ENCODE measurements at regions of chr11 and their contacts with region 1.

Region 1: DNA sequence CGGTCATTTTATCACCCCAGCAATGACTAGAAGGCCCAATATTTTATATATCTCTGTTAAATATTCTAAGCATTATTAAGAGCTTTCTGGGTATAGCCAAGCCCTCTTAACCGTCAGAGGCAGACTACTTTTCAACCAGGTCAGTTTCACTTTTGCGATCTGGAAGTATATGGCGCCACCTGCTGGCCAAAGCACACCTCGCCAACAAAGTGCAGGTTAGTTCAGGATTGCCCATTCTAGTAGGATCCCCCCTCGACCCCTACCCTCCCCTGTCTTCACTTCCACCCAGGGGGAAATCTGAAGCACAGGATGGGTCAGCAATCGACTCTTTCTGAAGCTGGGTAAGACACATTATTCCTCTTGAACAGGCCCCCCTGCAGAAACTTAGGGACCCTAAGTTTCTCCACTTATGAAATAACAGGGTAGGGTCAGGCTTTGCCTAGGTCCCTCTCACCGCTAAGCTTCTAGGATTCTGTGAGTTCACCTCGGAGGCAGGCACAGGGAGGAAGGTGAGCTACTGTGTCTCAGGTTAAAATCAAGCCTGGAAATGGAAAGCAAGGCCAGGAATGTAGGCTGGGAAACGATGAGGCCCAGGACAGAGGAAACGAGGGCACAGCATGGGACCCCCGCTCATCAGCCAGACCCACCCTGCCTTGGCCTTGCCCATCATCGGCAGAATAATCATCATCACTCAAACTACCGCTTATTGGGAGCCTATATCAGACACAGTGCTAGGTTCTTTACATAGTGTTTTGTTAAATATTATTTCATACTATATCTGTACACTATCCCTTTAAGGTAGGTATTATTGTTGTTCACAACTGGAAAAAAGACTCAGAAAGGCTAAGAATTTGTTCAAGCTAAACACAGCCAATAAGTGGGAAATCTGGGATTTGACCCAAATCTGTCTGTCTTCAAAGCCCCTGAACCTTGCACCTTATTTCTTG is 35.6 kb downstream of the KCNJ1 start:
- DNase-seq: peak; percentile 96
- H3K4me3 Mint-ChIP-seq: peak overlapping the region; percentile 8
- H3K27ac Mint-ChIP-seq: peak overlapping the region; percentile 85
- H3K4me1 Mint-ChIP-seq: peaks cover 17% of the 10 kb centered on the region
- H3K27me3 Mint-ChIP-seq: no peaks in the 10 kb centered on the region

Region 2: GRCh38 chr11:128157423-128158298 is 673.8 kb before region 1 on chr11:
- CTCF ChIA-PET with region 1: interaction called, 35 read pairs
- intact Hi-C with region 1: loop called (anchors 1 kb)
- DNase-seq: peak; percentile 74
- H3K4me3 Mint-ChIP-seq: peak overlapping the region; percentile 64
- H3K27ac Mint-ChIP-seq: peak overlapping the region; percentile 82
- H3K4me1 Mint-ChIP-seq: peaks cover 5% of the 10 kb centered on the region
- H3K27me3 Mint-ChIP-seq: no peaks in the 10 kb centered on the region

Region 3: GRCh38 chr11:128238521-128239265 is 592.8 kb before region 1 on chr11:
- CTCF ChIA-PET with region 1: no interaction called
- intact Hi-C with region 1: loop called (anchors 1 kb)
- DNase-seq: no peak
- H3K4me3 Mint-ChIP-seq: peak overlapping the region; percentile 41
- H3K27ac Mint-ChIP-seq: peak overlapping the region; percentile 55
- H3K4me1 Mint-ChIP-seq: peaks cover 31% of the 10 kb centered on the region
- H3K27me3 Mint-ChIP-seq: no peaks in the 10 kb centered on the region

Region 4: DNA sequence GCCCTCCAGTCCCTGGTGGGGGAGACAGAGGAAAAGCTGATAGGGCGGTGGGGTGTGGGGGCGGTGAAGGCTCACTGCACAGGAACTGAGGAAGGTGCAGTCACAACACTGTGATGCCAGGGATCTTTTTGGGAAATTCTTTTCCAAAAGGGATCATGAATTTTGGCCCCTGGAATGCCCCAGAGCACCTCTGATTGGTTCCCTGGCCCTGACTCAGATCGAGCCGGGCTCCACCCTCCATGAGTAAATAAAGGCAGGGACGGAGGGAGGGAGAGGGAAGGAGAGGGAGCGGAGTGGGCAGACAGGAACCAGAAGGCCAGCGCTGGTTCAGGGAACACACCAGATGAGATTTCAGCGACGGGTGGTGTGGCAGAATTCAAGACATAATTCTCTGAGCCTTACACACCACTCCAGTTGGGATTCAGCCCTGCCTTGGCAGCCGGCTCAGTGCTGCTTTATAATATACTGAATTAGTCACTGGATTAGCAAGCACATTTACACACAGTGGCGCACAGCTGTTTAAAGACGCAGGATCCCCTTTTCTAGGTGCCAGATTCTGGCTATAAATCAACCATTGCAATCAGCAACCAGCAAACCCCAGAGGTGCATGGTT is 324.3 kb before region 1 on chr11:
- CTCF ChIA-PET with region 1: no interaction called
- intact Hi-C with region 1: loop called (anchors 2 kb)
- DNase-seq: peak; percentile 82
- H3K4me3 Mint-ChIP-seq: peak overlapping the region; percentile 77
- H3K27ac Mint-ChIP-seq: peak overlapping the region; percentile 97
- H3K4me1 Mint-ChIP-seq: peaks cover 88% of the 10 kb centered on the region
- H3K27me3 Mint-ChIP-seq: no peaks in the 10 kb centered on the region

Region 5: DNA sequence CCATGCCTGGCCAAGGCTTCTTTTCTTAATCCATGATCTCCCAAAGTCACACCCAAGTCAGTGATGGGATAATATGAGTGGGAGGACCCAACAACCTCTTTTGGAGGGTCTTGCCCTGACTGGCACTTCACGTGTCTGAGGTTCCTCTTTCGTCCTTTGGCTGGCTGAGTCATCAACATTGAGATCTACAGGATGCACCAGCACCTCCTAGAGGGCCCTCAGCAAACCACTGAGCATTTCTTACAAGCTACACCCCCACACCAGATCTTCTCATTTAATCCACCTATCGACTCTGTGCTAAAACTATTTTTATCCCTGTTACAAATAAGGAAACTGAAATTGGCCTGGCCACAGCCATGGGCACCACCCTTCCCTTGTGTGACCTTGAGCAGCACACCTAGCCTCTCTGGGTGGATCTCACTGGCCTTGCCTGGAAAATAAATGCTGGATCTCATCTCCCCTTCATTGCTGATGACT is 74.2 kb before region 1 on chr11:
- CTCF ChIA-PET with region 1: interaction called, 4 read pairs
- intact Hi-C with region 1: loop called (anchors 1 kb)
- DNase-seq: peak; percentile 85
- H3K4me3 Mint-ChIP-seq: peak overlapping the region; percentile 14
- H3K27ac Mint-ChIP-seq: peak overlapping the region; percentile 86
- H3K4me1 Mint-ChIP-seq: peaks cover 74% of the 10 kb centered on the region
- H3K27me3 Mint-ChIP-seq: no peaks in the 10 kb centered on the region

Region 6: DNA sequence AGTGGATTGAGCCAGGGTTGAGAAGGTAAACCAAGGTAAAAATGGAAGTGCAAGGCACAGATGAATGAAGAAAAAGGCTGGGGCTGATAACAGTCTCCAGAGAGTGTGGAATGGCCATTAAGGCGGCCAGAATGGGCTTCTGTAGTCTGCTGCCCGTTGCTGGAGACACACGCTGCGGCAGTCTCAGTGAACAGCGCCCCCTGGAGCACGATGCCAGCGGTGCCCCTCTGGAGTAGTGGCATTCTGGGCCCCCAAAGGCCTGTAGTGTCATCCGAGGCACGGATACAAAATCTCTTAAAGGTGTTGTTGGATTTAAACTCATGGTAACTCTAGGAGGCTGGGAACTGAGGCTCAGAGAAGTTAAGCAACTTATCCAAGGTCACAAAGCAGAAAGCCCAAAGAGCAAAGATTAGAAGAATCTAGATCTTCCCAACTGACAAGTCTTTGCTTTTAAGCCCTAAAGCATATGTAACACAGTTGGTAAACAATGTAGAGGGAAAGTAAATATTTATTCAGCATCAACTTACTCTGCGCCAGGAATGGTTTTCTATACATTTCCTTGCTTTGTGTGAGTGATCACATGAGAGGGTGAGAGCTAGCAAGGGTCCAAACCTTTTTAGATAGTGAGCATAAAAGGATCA is 17.5 kb after region 1 on chr11:
- CTCF ChIA-PET with region 1: interaction called, 30 read pairs
- intact Hi-C with region 1: no loop called
- DNase-seq: peak; percentile 80
- H3K4me3 Mint-ChIP-seq: no peak overlapping the region
- H3K27ac Mint-ChIP-seq: no peak overlapping the region
- H3K4me1 Mint-ChIP-seq: peaks cover 13% of the 10 kb centered on the region
- H3K27me3 Mint-ChIP-seq: no peaks in the 10 kb centered on the region